ENCODE measurements at regions of chr3 and their contacts with region 1.

Region 1: DNA sequence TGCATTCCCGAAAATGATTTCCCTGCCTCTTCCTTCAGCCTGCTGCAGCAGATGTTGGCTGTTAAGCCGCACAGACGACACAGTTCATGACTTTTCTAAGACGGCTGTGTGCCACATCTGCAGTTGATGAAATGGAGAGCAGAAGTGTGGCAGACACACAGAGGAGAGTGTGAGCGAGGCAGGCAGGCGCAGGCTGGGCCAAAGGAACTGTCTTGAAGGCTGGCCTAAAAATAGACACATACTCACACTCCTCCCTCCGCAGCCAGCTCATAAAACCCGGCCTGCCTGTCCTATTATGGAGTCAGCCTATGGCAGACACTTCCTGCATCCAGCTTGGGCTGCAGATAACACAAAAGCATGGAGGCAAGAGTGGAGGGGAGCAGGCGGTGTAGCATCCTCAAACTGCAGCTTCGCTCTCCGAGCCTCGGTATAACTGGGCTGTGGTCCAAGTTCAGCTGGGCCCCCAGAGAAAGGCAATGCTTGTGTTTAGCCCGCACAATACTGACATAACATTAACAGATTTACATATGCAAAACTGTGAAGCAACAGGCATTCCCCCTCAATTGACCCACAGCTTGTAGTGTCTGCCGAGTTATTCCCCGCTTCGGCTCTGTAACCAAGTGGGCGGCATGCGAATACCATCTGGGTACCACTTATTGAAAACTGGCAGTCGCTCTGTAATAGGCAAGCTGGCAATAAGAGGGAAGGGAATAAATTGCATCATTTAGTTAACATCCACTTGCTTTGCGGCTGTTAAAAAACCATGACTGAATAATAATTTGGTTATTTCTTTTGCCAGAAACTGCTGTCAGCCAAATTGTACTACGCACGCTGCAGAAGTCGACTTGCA is 40.8 kb downstream of the FOXP1 start:
- DNase-seq: peak; percentile 92
- ATAC-seq: peak; percentile 98
- H3K4me3 ChIP-seq: peak overlapping the region; percentile 6; the same call in 1 of the 2 replicates
- H3K27ac ChIP-seq: peak overlapping the region; percentile 69
- H3K4me1 ChIP-seq: peaks cover 14% of the 10 kb centered on the region
- H3K27me3 ChIP-seq: no peaks in the 10 kb centered on the region
- CTCF ChIP-seq: no peak
- POLR2A ChIP-seq: no peak; the same call in 1 of the 2 replicates
- RAD21 ChIP-seq: 0 out of 2 replicates have a peak, but pooled peaks have one; percentile 17

Region 2: GRCh38 chr3:69784954-69785514 is 1757.7 kb before region 1 on chr3:
- CTCF ChIA-PET with region 1: no interaction called
- POLR2A ChIA-PET with region 1: interaction called, 11 read pairs
- dilution Hi-C with region 1: no loop called
- in situ Hi-C with region 1: no loop called
- intact Hi-C with region 1: no loop called
- DNase-seq: peak; percentile 83
- ATAC-seq: peak; percentile 95
- H3K4me3 ChIP-seq: no peak overlapping the region
- H3K27ac ChIP-seq: peak overlapping the region; percentile 0; the same call in 1 of the 2 replicates
- H3K4me1 ChIP-seq: peaks cover 15% of the 10 kb centered on the region
- H3K27me3 ChIP-seq: no peaks in the 10 kb centered on the region
- CTCF ChIP-seq: no peak
- POLR2A ChIP-seq: no peak
- RAD21 ChIP-seq: 0 out of 2 replicates have a peak, but pooled peaks have one; percentile 12

Measured in IMR-90 (cell line).